ENCODE measurements at regions of chr12 and their contacts with region 1.

Region 1: DNA sequence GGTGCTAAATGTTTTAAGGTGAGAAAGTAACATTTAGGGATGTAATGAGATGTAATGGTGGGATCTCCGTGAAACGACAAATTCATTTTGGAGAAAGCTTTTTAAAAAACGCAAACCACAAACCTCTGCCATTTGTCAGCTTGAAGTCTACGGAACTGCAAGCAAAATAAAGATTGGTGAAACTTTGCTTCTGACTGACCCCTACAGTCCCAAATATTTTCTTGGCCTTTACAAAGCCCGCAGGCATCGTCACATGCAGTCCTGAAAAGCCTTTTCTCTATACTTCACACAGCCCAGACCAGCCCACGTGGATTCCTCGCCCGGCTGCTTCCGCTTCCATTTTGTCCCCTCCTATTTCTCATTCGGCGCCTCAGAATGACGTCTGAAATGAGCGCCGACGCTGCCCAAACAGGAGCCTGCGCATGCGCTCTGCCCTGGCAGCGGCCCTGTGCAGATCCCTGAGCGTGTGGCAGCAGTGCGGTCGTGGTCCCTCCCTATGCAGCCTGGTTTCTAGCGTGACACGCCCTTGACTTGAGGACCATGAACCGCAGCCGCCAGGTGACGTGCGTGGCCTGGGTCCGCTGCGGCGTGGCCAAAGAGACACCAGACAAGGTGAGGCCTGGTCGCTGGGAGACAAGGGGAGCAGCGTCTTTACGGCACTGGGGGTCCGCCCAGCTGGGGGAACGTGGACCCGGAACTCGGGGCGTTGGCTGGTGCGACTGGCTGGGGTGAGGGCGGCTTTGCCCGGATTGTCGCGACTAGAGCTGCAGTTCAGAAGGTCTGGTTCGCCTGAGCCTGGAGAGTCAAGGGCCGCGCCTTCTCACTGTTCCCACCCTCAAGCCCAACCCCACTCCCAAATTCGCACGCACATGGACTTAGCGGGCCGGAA is at the start of gene PWP1:
- DNase-seq: peak; percentile 97
- ATAC-seq: peak; percentile 92
- H3K4me3 Mint-ChIP-seq: peak within 1 kb of the TSS; percentile 94
- H3K27ac Mint-ChIP-seq: peak within 1 kb of the TSS; percentile 94
- H3K4me1 Mint-ChIP-seq: peaks cover 27% of the 10 kb centered on the region
- H3K27me3 Mint-ChIP-seq: no peaks in the 10 kb centered on the region
- total RNA-seq, gene PWP1: 59.5 to 60.0 TPM

Region 2: GRCh38 chr12:106247674-106248311 is 1437.8 kb before region 1 on chr12 and contains the start of gene CKAP4:
- CTCF ChIA-PET with region 1: no interaction called
- POLR2A ChIA-PET with region 1: no interaction called
- intact Hi-C with region 1: loop called in 1 of 2 experiments (anchors 5 kb)
- DNase-seq: peak; percentile 72
- ATAC-seq: peak; percentile 49
- H3K4me3 Mint-ChIP-seq: peak within 1 kb of the TSS; percentile 68
- H3K27ac Mint-ChIP-seq: peak within 1 kb of the TSS; percentile 80
- H3K4me1 Mint-ChIP-seq: peaks cover 30% of the 10 kb centered on the region
- H3K27me3 Mint-ChIP-seq: no peaks in the 10 kb centered on the region
- total RNA-seq, gene CKAP4: 13.7 to 15.6 TPM

Region 3: DNA sequence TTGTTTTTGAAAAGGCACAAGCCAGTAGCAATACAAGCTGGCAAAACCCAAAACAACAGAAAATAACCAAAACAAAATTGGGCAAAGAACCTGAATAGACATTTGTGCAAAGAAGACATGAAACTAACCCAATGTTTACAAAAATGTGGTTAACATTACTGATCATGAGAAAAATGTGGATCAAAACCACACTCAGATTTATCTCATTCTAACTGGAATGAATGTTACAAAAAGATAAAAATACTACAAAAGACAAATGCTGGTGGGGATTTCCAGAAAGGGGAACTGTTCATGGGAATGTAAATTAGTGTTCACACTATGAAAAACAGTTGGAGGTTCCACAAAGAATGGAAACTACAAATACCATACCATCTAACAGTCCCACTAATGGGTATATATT is 115.5 kb after region 1 on chr12:
- CTCF ChIA-PET with region 1: no interaction called
- POLR2A ChIA-PET with region 1: no interaction called
- intact Hi-C with region 1: no loop called
- DNase-seq: no peak
- ATAC-seq: no peak
- H3K4me3 Mint-ChIP-seq: no peak overlapping the region
- H3K27ac Mint-ChIP-seq: no peak overlapping the region
- H3K4me1 Mint-ChIP-seq: no peaks in the 10 kb centered on the region
- H3K27me3 Mint-ChIP-seq: peaks cover 15% of the 10 kb centered on the region

Region 4: GRCh38 chr12:108731105-108731865 is 1045.7 kb after region 1 on chr12 and contains the start of gene CORO1C:
- CTCF ChIA-PET with region 1: no interaction called
- POLR2A ChIA-PET with region 1: no interaction called
- intact Hi-C with region 1: loop called in 1 of 2 experiments (anchors 5 kb)
- DNase-seq: peak; percentile 98
- ATAC-seq: peak; percentile 78
- H3K4me3 Mint-ChIP-seq: peak within 1 kb of the TSS; percentile 88
- H3K27ac Mint-ChIP-seq: peak within 1 kb of the TSS; percentile 93
- H3K4me1 Mint-ChIP-seq: peaks cover 36% of the 10 kb centered on the region
- H3K27me3 Mint-ChIP-seq: no peaks in the 10 kb centered on the region
- total RNA-seq, gene CORO1C: 83.5 to 90.8 TPM

Region 5: GRCh38 chr12:109052414-109053323 is 1367.1 kb after region 1 on chr12 and contains the start of gene USP30:
- CTCF ChIA-PET with region 1: no interaction called
- POLR2A ChIA-PET with region 1: no interaction called
- intact Hi-C with region 1: loop called in 1 of 2 experiments (anchors 2 kb)
- DNase-seq: peak; percentile 91
- ATAC-seq: peak; percentile 70
- H3K4me3 Mint-ChIP-seq: peak within 1 kb of the TSS; percentile 86
- H3K27ac Mint-ChIP-seq: peak within 1 kb of the TSS; percentile 97
- H3K4me1 Mint-ChIP-seq: peaks cover 6% of the 10 kb centered on the region
- H3K27me3 Mint-ChIP-seq: no peaks in the 10 kb centered on the region
- total RNA-seq, gene USP30: 9.2 to 14.5 TPM

Measured in activated CD4-positive, alpha-beta T cell treated with anti-CD3 and anti-CD28 coated beads for 36 hours (primary cell).